Caco-2 (cell line): ENCODE measurements at regions of chr6 and their contacts with region 1.

Region 1: DNA sequence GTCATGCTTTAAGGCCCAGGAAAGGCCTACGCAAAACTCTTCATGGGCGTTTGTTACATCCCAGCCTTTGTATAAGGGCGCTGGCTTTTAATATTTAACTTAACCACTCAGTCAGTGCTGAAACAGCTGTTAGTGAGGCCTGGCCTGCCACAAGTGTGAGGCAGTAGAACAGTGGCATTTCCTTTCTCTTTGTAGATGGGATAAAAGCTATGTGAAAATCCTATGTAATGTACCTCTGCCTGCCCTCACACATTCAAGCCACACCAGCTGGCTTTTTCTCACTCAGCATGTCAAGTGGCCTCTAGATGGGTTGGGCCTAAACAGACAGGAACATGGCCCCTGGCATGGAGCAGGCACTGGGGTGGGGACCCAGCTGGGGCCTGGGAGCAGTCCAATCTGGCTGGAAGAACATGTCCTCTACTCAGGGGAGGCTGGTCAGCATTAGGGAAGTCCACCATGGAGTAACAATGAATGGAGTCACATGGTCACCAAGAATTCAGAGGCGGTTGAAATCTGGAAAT is 20.7 kb downstream of the CGA start:
- DNase-seq: peak in 1 of 2 experiments; percentile 71
- H3K4me3 ChIP-seq: no peak overlapping the region
- H3K4me3 Mint-ChIP-seq: no peak overlapping the region
- H3K27ac Mint-ChIP-seq: peak overlapping the region; percentile 87
- H3K4me1 ChIP-seq: peaks cover 36% of the 10 kb centered on the region
- H3K4me1 Mint-ChIP-seq: peaks cover 21% of the 10 kb centered on the region
- H3K27me3 ChIP-seq: no peaks in the 10 kb centered on the region
- H3K27me3 Mint-ChIP-seq: no peaks in the 10 kb centered on the region
- CTCF ChIP-seq: no peak

Region 2: DNA sequence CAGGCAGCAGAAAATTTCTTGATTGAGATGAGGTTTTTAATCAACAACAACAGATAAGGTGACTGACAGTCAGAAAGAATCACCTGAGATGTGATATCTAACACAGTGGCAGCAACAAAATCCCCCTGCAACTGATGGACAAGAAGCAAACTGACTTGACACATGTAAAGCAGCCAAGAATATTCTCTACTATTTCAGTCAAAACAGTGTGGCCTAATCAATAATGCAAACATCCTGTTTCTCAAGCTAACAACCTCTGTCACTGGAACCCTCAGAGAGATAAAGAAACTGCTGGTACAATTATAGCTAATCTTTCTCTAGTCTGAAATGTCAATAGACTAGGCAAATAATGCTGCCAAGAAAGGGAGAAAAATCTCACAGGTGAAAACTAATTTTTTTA is 25.3 kb after region 1 on chr6:
- CTCF ChIA-PET with region 1: interaction called, 4 read pairs
- POLR2A ChIA-PET with region 1: no interaction called
- intact Hi-C with region 1: loop called (anchors 2 kb)
- DNase-seq: no peak
- H3K4me3 ChIP-seq: no peak overlapping the region
- H3K4me3 Mint-ChIP-seq: no peak overlapping the region
- H3K27ac Mint-ChIP-seq: no peak overlapping the region
- H3K4me1 ChIP-seq: peaks cover 9% of the 10 kb centered on the region; the same call in 1 of the 2 replicates
- H3K4me1 Mint-ChIP-seq: peaks cover 13% of the 10 kb centered on the region
- H3K27me3 ChIP-seq: no peaks in the 10 kb centered on the region
- H3K27me3 Mint-ChIP-seq: peaks cover 3% of the 10 kb centered on the region
- CTCF ChIP-seq: no peak

Region 3: GRCh38 chr6:87261534-87261933 is 187.4 kb after region 1 on chr6:
- CTCF ChIA-PET with region 1: no interaction called
- POLR2A ChIA-PET with region 1: no interaction called
- intact Hi-C with region 1: no loop called
- DNase-seq: no peak
- H3K4me3 ChIP-seq: no peak overlapping the region
- H3K4me3 Mint-ChIP-seq: no peak overlapping the region
- H3K27ac Mint-ChIP-seq: no peak overlapping the region
- H3K4me1 ChIP-seq: no peaks in the 10 kb centered on the region
- H3K4me1 Mint-ChIP-seq: no peaks in the 10 kb centered on the region
- H3K27me3 ChIP-seq: no peaks in the 10 kb centered on the region
- H3K27me3 Mint-ChIP-seq: no peaks in the 10 kb centered on the region
- CTCF ChIP-seq: no peak

Region 4: GRCh38 chr6:87341899-87342298 is 267.7 kb after region 1 on chr6:
- CTCF ChIA-PET with region 1: no interaction called
- POLR2A ChIA-PET with region 1: no interaction called
- intact Hi-C with region 1: loop called (anchors 5 kb)
- DNase-seq: no peak
- H3K4me3 ChIP-seq: no peak overlapping the region
- H3K4me3 Mint-ChIP-seq: no peak overlapping the region
- H3K27ac Mint-ChIP-seq: no peak overlapping the region
- H3K4me1 ChIP-seq: peaks cover 25% of the 10 kb centered on the region
- H3K4me1 Mint-ChIP-seq: peaks cover 24% of the 10 kb centered on the region
- H3K27me3 ChIP-seq: no peaks in the 10 kb centered on the region
- H3K27me3 Mint-ChIP-seq: no peaks in the 10 kb centered on the region
- CTCF ChIP-seq: no peak

Region 5: DNA sequence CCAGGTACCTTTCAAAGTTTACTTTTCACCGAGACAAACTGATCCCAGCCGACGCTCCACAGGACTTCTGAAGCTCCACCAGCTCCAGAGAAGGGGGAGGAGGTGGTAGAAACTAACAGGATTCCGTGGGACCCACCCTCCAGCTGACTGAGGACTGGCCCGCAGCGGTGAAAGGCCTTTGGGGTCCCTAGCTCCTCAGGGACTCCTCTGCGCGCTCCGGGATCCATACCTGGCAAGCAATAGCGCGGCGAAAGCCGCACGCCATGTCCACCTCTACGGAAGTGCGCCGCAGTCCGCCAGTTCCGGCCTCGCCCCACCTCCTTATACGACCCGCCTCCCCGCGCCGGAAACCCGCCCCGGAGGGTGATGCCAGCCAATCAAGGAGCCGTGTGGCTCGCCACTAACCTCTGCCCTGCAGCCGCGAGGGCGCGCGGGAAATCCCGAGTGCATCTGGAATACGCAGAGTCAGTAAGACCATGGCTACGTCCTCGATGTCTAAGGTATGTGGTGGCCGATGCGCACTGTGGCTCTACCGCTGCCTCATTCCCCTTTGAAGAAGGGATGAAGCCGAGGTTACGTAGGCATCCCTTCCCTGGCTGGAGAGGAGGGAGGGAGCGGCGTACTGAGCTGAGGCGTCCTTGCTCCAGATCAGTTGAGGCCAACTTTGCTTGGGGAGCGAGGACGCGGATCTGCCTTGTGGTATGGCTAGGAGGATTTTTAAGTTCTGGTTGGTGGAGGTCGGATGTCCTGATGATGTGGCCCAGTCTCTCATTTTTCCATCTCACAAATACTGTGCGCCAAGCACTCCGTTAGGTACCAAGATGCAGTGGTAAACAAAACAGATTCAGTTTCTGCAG is 515.8 kb after region 1 on chr6 and contains the starts of genes ORC3 and RARS2:
- CTCF ChIA-PET with region 1: no interaction called
- POLR2A ChIA-PET with region 1: no interaction called
- intact Hi-C with region 1: no loop called
- DNase-seq: peak; percentile 96
- H3K4me3 ChIP-seq: peak within 1 kb of the TSS; percentile 73
- H3K4me3 Mint-ChIP-seq: peak within 1 kb of the TSS; percentile 93
- H3K27ac Mint-ChIP-seq: peak within 1 kb of the TSS; percentile 91
- H3K4me1 ChIP-seq: peaks cover 18% of the 10 kb centered on the region
- H3K4me1 Mint-ChIP-seq: peaks cover 15% of the 10 kb centered on the region
- H3K27me3 ChIP-seq: no peaks in the 10 kb centered on the region
- H3K27me3 Mint-ChIP-seq: no peaks in the 10 kb centered on the region
- CTCF ChIP-seq: no peak
- total RNA-seq, gene ORC3: 33.8 and 34.5 TPM in 2 replicates
- total RNA-seq, gene RARS2: 32.0 and 37.4 TPM in 2 replicates

Region 6: GRCh38 chr6:87701676-87702588 is 627.8 kb after region 1 on chr6 and contains the start of gene AKIRIN2:
- CTCF ChIA-PET with region 1: no interaction called
- POLR2A ChIA-PET with region 1: no interaction called
- intact Hi-C with region 1: loop called (anchors 5 kb)
- DNase-seq: peak; percentile 96 to 97
- H3K4me3 ChIP-seq: peak within 1 kb of the TSS; percentile 60
- H3K4me3 Mint-ChIP-seq: peak within 1 kb of the TSS; percentile 99
- H3K27ac Mint-ChIP-seq: peak within 1 kb of the TSS; percentile 93
- H3K4me1 ChIP-seq: peaks cover 9% of the 10 kb centered on the region
- H3K4me1 Mint-ChIP-seq: peaks cover 9% of the 10 kb centered on the region
- H3K27me3 ChIP-seq: no peaks in the 10 kb centered on the region
- H3K27me3 Mint-ChIP-seq: no peaks in the 10 kb centered on the region
- CTCF ChIP-seq: no peak
- total RNA-seq, gene AKIRIN2: 51.3 and 53.5 TPM in 2 replicates